ENCODE measurements at regions of chrX and their contacts with region 1.

Region 1: GRCh38 chrX:150772150-150772970 is 79.2 kb downstream of the MTMR1 start:
- DNase-seq: peak; percentile 81
- CTCF ChIP-seq: peak; percentile 73

Region 2: GRCh38 chrX:150568320-150569154 is 203.8 kb before region 1 on chrX and contains the start of gene MTM1:
- CTCF ChIA-PET with region 1: no interaction called
- POLR2A ChIA-PET with region 1: no interaction called
- DNase-seq: peak; percentile 91
- CTCF ChIP-seq: no peak

Region 3: GRCh38 chrX:150826981-150827380 is 54.6 kb after region 1 on chrX:
- CTCF ChIA-PET with region 1: no interaction called
- POLR2A ChIA-PET with region 1: no interaction called
- DNase-seq: no peak
- CTCF ChIP-seq: no peak

Region 4: DNA sequence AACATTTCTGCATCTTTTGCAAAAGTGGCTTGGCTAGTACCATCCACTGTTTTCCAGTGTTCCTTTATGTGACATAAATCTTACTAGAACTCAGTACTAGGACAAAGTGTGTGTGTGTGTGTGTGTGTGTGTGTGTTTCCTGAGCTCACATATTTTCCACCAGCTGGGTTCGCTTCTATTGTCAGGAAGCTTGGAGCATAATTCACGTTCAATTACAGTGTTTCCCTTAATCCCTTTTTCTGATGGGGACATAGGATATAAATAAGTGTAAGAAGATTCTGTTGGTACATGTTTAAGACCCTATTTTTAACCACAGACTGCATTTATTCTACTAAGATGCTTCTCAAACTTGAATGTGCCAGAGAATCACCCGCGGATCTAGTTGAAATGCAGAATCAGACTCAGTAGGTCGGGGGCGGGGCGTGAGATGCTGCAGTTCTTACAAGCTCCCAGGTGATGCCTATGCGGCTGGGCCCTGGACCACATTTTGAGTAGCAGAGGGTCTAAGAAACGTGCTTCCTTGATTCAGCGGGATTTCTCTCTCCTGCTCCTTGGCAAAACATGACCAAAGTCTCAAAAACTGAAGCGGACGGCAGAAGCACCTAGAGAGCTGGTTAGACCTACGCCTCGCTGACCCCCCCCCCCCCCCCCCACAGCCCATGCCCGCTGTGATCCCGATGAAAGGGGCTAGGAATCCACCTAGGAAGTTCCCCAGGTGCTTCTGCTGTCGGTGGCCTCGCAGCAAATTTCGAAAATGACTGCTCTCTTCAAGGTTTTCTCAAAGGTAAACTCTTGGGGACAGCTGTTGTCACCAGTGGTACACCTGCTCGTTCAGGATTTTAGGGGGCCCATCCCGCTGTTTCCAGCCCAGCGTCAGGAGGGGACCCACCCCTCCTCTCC is 125.3 kb after region 1 on chrX:
- CTCF ChIA-PET with region 1: interaction called, 10 read pairs
- POLR2A ChIA-PET with region 1: interaction called, 3 read pairs
- DNase-seq: no peak
- CTCF ChIP-seq: no peak

Region 5: DNA sequence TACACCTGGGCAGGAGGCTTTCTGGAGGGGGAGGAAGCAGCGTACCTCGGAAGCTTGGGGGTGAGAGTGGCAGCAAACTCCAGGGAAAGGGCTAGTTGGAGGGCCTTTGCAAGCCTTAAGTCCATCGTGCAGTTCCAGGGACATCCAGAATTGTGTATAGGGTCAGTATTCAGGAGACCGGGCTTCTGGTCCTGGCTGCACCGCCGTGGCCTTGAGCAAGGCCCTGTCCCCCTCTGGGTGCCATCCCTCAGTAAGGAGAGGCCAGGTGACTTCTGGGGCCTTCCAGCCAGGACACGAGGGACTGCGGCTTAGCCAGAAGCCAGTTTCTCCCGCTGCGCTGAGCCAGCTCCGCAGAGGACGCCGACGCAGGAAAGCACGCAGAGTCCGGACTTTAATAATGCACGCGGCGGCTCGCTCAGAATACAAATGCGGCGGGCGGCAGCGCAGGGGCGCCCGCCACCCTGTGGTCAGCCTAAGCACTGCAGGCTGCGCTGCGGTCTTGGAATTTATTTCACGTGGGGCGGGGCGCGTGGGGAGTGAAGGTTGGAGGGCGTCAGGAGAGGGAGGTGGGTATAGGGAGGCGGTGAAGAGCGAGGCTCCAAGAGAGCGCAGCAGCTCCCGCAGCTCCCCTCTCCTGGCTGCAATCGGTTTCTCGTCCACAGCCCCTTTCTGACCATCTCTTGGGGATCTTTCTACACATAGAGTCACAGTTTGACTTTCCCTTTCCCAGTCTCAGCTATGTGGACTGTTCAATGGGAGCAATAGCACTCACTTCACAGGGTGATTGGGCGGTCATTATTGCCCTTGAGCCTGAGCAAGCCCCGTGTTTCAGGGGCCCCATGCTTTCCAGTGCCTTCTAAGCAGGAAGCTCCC is 310.0 kb after region 1 on chrX:
- CTCF ChIA-PET with region 1: interaction called, 108 read pairs
- POLR2A ChIA-PET with region 1: no interaction called
- DNase-seq: peak; percentile 76
- CTCF ChIP-seq: peak; percentile 83

Measured in GM10248 (cell line).